Common myeloid progenitor, CD34-positive (primary cell): ENCODE measurements at regions of chr6 and their contacts with region 1.

Region 1: DNA sequence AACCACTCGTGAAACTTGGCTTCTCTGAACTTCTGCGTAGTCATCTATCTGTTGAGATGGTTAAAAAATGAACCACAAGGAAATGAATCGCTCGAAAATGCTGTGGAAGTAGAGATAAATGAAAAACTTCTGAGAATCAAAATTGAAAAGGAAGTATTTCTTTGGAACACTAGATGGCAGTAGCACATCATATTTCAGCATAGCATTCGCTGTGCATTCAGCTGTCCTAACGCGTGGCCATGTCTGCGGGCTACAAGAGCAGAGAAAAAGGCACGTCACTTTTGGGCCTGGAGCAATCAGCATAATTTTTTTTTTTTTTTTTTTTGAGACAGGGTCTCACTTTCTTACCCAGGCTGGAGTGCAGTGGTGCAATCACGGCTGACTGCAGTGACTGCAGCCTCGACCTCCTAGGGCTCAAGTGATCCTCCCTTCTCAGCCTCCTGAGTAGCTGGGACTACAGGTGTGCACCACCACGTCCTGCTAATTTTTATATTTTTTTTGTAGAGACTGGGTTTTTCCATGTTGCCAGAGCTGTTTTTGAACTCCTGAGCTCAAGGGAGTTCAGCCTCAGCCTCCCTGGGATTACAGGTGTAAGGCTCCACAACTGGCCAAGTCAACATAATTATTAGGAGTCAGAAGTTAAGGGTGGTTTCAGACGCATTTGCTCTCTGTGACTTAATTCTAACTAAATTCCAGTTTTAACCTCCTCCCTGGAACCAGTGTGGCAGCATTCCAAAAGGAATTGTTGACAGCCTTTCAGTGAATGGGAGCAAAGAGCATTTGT is 8.8 kb upstream of the PERP start:
- DNase-seq: peak; percentile 82 to 92 (median 91)
- H3K4me3 ChIP-seq: peak overlapping the region in 1 of 7 experiments; percentile 8
- H3K27ac ChIP-seq: no peak overlapping the region
- H3K4me1 ChIP-seq: peaks cover 2 to 8% (median 7%) of the 10 kb centered on the region in 4 experiments
- H3K27me3 ChIP-seq: peaks cover 0 to 10% (median 0%) of the 10 kb centered on the region in 5 experiments

Region 2: GRCh38 chr6:138129190-138129589 is 13.1 kb after region 1 on chr6:
- CTCF ChIA-PET with region 1: interaction called, 10 read pairs
- POLR2A ChIA-PET with region 1: no interaction called
- DNase-seq: no peak
- H3K4me3 ChIP-seq: no peak overlapping the region
- H3K27ac ChIP-seq: no peak overlapping the region
- H3K4me1 ChIP-seq: no peaks in the 10 kb centered on the region
- H3K27me3 ChIP-seq: peaks cover 0 to 5% (median 0%) of the 10 kb centered on the region in 5 experiments

Region 3: DNA sequence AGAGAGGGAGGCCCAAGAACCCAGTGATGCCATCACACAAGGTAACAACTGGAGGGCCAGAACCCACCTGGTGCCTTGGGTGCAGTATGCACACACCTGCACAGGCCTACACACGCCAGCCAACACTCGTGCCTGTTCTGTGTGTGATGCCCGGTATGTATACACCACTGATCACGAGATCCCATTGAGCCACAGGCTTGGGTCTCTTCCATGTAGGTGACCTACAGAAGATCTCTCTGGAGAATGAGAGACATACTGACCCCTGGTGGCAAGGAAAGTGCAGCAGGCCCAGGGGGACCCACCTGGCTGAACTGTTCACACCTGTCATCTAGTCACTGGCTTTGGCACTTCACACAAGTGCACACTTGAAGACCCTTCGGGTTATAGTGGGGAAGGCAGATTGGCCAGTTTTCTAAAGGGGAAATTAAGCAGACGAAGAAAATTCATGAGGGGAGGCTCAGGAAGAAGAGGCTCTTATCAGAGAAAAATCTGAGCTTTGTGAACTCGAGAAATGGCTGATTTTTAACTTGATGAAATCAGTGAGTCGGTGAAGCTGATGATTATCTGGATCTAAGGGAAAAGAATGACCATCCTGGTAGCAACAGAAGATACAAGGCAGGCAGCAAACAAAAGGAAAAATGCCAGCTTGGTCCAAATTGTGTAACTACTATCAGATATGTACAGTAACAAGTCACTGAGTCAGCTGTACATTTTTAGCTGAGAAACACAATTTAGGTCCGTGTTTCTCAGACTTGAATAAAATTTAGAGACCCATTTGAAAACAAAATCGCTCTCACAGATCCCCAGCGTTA is 171.3 kb after region 1 on chr6:
- CTCF ChIA-PET with region 1: interaction called, 72 read pairs
- POLR2A ChIA-PET with region 1: interaction called, 10 read pairs
- DNase-seq: peak; percentile 31 to 49 (median 45)
- H3K4me3 ChIP-seq: no peak overlapping the region
- H3K27ac ChIP-seq: no peak overlapping the region
- H3K4me1 ChIP-seq: no peaks in the 10 kb centered on the region
- H3K27me3 ChIP-seq: peaks cover 0 to under 1% (median 0%) of the 10 kb centered on the region in 5 experiments

Region 4: GRCh38 chr6:138403801-138404661 is 288.0 kb after region 1 on chr6 and contains the start of gene HEBP2:
- CTCF ChIA-PET with region 1: interaction called, 30 read pairs
- POLR2A ChIA-PET with region 1: no interaction called
- DNase-seq: peak; percentile 95 to 98 (median 97)
- H3K4me3 ChIP-seq: peak within 1 kb of the TSS; percentile 66 to 90 (median 81)
- H3K27ac ChIP-seq: peak within 1 kb of the TSS; percentile 70 to 89
- H3K4me1 ChIP-seq: peaks cover 4 to 31% (median 20%) of the 10 kb centered on the region in 4 experiments
- H3K27me3 ChIP-seq: no peaks in the 10 kb centered on the region

Region 5: DNA sequence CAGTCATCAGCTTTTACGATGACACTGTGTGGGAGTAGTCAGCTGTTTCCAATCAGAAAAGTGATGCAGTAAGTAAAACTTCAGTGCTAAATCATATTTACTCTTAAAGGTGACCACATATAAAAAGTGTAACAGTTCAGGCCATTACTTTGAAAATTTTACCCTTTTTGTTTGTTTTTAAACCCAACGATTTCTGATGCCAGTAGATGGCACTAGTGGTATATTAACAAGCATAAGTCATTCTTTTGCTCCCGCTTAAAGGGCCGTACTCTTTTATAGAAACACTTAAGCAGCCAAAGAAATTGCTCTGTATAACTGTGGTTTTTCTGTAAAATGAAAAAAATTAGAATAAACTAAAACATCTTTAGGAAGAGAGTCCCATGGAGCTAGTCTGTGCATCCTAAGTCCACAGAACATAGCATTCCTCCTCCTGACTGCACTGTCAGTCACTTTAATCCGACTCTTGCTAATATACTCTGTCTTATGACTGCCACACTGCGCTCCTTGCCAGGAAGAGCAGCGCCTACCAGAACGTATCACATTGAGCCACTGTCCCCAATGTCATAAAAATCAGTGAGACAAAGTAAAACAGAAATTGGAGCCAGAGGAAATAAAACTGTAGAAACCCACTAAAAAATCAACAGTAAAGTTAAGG is 313.0 kb after region 1 on chr6:
- CTCF ChIA-PET with region 1: interaction called, 16 read pairs
- POLR2A ChIA-PET with region 1: no interaction called
- DNase-seq: peak; percentile 61 to 84 (median 80)
- H3K4me3 ChIP-seq: no peak overlapping the region
- H3K27ac ChIP-seq: no peak overlapping the region
- H3K4me1 ChIP-seq: peaks cover 0 to 4% (median 2%) of the 10 kb centered on the region in 4 experiments
- H3K27me3 ChIP-seq: no peaks in the 10 kb centered on the region

Region 6: DNA sequence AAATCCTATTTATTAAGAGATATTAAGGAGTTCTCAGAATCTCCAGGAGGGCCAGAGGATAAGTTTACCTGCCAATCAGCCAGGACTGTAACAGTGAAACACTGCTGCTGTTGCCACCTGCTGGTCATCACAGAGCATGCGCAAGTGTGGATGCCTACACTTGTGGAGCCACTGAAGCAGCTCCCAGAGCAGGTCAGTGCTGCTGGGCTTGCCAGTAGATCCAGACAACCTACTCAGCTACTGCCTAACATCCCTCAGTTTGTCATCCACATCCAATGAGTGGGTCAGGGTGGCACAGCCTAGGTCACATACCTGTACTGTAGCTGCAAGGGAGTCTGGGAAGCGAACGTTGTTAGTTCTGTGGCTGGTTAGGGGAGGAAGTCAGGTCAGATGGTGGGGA is 401.6 kb after region 1 on chr6:
- CTCF ChIA-PET with region 1: interaction called, 22 read pairs
- POLR2A ChIA-PET with region 1: no interaction called
- DNase-seq: peak; percentile 34 to 53 (median 45)
- H3K4me3 ChIP-seq: no peak overlapping the region
- H3K27ac ChIP-seq: no peak overlapping the region
- H3K4me1 ChIP-seq: peaks cover 7 to 26% (median 17%) of the 10 kb centered on the region in 4 experiments
- H3K27me3 ChIP-seq: no peaks in the 10 kb centered on the region